Activated CD4-positive, alpha-beta T cell treated with anti-CD3 and anti-CD28 coated beads for 36 hours (primary cell): ENCODE measurements at regions of chr6 and their contacts with region 1.

Region 1: GRCh38 chr6:9066726-9067125 is 631.4 kb upstream of the SLC35B3 start:
- DNase-seq: no peak
- ATAC-seq: no peak
- H3K4me3 Mint-ChIP-seq: no peak overlapping the region
- H3K27ac Mint-ChIP-seq: no peak overlapping the region
- H3K4me1 Mint-ChIP-seq: no peaks in the 10 kb centered on the region
- H3K27me3 Mint-ChIP-seq: no peaks in the 10 kb centered on the region

Region 2: GRCh38 chr6:8736156-8736895 is 330.4 kb before region 1 on chr6:
- CTCF ChIA-PET with region 1: no interaction called
- POLR2A ChIA-PET with region 1: no interaction called
- intact Hi-C with region 1: no loop called
- DNase-seq: no peak
- ATAC-seq: no peak
- H3K4me3 Mint-ChIP-seq: no peak overlapping the region
- H3K27ac Mint-ChIP-seq: no peak overlapping the region
- H3K4me1 Mint-ChIP-seq: no peaks in the 10 kb centered on the region
- H3K27me3 Mint-ChIP-seq: peaks cover 2% of the 10 kb centered on the region

Region 3: GRCh38 chr6:9403736-9404135 is 337.0 kb after region 1 on chr6:
- CTCF ChIA-PET with region 1: no interaction called
- POLR2A ChIA-PET with region 1: interaction called, 11 read pairs
- intact Hi-C with region 1: no loop called
- DNase-seq: no peak
- ATAC-seq: no peak
- H3K4me3 Mint-ChIP-seq: no peak overlapping the region
- H3K27ac Mint-ChIP-seq: no peak overlapping the region
- H3K4me1 Mint-ChIP-seq: no peaks in the 10 kb centered on the region
- H3K27me3 Mint-ChIP-seq: peaks cover 12% of the 10 kb centered on the region